Thyroid gland (tissue), 4 donors: ENCODE measurements at regions of chr6 and their contacts with region 1.

Region 1: GRCh38 chr6:41278699-41279405 is 7.6 kb downstream of the TREM1 start:
- DNase-seq: peak; percentile 83 to 85
- H3K4me3 ChIP-seq: no peak overlapping the region
- H3K27ac ChIP-seq: peak overlapping the region; percentile 5 to 38 (median 27)
- H3K4me1 ChIP-seq: peaks cover 0 to 10% of the 10 kb centered on the region in 2 donors
- H3K27me3 ChIP-seq: no peaks in the 10 kb centered on the region
- CTCF ChIP-seq: peak; percentile 15 to 79 (median 64)
- POLR2A ChIP-seq: no peak

Region 2: DNA sequence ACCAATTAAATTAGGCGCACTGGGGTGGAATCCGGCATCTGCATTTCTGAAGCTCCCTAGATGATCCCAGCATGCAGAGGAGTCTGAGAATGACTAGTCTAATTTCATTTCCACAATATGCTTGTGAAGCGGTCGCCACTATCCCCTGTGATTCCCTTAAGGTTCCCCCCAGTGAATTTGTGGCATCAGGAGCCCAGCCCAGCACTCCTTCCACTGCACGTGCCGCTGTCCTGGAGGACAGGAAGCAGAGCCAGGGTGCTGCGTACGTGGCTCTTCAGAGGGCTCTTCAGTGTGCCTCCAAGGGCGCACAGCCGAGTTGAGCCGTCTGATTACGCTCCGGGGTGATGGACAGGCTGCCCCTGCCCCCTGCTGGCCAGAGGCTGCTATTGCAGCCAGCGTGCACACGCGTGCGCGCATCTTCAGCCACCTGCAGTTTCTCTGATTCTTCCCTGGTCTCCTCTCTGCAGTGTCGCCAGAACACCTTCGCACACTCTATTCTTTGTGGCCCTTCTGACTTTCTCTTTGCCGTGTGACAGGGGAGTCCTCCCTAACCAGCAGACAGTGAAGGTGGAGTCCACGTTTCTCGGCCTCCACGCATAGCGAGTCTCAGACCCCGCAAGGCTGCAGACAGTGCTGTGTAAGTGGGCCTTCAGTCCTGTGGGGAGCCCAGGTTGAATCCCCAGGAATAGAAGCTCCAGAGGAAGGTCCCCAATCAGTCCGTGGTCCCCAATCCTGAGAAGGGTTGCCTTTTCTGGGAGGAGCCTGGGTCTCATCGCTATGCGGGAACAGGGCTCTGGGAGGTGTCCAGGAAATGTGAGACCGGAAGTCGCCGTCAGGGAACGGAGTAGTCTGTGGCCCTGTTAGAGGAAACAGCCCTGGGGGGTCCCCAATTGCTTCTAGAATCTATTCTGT is 40.1 kb after region 1 on chr6:
- intact Hi-C with region 1: loop called (anchors 5 kb)
- DNase-seq: peak; percentile 93 to 95
- H3K4me3 ChIP-seq: peak overlapping the region in 2 of 3 donors; percentile 9 to 25
- H3K27ac ChIP-seq: peak overlapping the region; percentile 61 to 66 (median 63)
- H3K4me1 ChIP-seq: peaks cover 6 to 13% of the 10 kb centered on the region in 2 donors
- H3K27me3 ChIP-seq: no peaks in the 10 kb centered on the region
- CTCF ChIP-seq: peak; percentile 99 to 100 (median 99)
- POLR2A ChIP-seq: peak in 1 of 2 donors; percentile 20